ENCODE measurements at regions of chr12 and their contacts with region 1.

Region 1: DNA sequence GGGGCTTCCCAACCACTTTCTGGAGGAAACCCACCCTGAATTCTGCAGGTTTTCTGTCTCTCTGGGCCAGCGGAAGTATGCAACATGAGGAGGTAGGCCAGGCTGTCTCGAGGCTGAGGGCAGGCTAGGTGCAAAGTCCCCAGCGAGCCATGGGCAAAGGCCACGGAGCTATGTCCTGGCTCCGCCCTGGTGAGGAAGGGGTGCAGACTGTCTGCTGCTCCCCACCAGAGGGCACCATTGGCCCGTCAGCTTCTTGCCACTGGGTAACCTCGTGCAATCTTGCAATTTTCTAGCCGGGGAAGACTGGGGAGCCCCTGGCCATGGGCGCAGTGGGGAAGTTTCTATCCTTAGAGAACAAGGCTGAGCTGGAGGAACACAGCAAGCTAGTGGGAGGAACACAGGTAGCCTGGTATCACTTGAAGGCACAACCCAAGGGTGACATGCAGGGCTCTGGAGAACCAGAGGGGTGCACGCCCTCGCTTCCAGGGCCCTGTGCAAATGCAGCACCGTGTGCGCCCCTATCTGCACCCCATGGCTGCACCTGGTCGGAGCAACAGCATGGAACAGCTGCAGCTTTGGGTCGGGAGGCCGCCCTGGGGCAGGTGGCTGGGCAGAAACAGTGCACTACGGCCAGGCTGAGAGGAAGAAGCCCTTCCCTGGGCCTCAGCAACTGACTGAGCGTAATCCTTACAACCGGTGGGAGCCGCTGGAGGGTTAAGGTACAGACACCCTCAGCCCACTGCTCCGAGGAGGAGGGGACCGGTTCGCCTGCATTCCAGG is 27.6 kb upstream of the RPLP0 start:
- DNase-seq: peak; percentile 96
- ATAC-seq: peak; percentile 62
- H3K4me3 Mint-ChIP-seq: peak overlapping the region; percentile 55
- H3K27ac Mint-ChIP-seq: peak overlapping the region; percentile 98
- H3K4me1 Mint-ChIP-seq: peaks cover 78% of the 10 kb centered on the region
- H3K27me3 Mint-ChIP-seq: no peaks in the 10 kb centered on the region; the same call in 1 of the 2 replicates
- CTCF ChIP-seq: peak; percentile 73

Region 2: DNA sequence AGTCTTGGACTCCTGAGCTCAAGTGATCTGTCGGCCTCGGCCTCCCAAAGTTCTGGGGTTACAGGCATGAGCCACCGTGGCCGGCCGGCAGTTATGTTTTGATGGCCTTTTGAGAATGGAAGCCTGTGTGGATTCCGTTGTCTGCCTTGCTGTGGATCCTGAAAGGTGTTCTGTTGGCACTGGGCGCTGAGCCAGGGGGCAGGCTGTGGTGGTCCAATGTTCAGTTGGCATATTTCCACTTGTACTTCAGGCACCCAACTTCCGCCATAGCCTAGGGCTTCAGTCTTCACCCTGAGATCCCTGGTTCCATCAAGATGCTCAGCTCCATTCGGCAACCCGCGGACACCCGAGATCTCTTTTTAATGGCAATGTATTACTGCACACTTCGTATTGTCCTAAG is 21.3 kb before region 1 on chr12:
- CTCF ChIA-PET with region 1: interaction called, 86 read pairs
- POLR2A ChIA-PET with region 1: interaction called, 97 read pairs
- DNase-seq: no peak
- ATAC-seq: no peak
- H3K4me3 Mint-ChIP-seq: no peak overlapping the region
- H3K27ac Mint-ChIP-seq: no peak overlapping the region
- H3K4me1 Mint-ChIP-seq: peaks cover under 1% of the 10 kb centered on the region
- H3K27me3 Mint-ChIP-seq: no peaks in the 10 kb centered on the region
- CTCF ChIP-seq: no peak

Region 3: GRCh38 chr12:120265473-120266179 is 37.1 kb after region 1 on chr12 and contains the start of gene PXN:
- CTCF ChIA-PET with region 1: interaction called, 717 read pairs
- POLR2A ChIA-PET with region 1: interaction called, 198 read pairs
- DNase-seq: peak; percentile 88
- ATAC-seq: peak; percentile 84
- H3K4me3 Mint-ChIP-seq: peak within 1 kb of the TSS; percentile 83
- H3K27ac Mint-ChIP-seq: peak within 1 kb of the TSS; percentile 85
- H3K4me1 Mint-ChIP-seq: peaks cover 49% of the 10 kb centered on the region
- H3K27me3 Mint-ChIP-seq: no peaks in the 10 kb centered on the region
- CTCF ChIP-seq: peak; percentile 78
- total RNA-seq, gene PXN: 96.6 to 132 TPM (median 99.2 TPM) in 3 replicates

Region 4: DNA sequence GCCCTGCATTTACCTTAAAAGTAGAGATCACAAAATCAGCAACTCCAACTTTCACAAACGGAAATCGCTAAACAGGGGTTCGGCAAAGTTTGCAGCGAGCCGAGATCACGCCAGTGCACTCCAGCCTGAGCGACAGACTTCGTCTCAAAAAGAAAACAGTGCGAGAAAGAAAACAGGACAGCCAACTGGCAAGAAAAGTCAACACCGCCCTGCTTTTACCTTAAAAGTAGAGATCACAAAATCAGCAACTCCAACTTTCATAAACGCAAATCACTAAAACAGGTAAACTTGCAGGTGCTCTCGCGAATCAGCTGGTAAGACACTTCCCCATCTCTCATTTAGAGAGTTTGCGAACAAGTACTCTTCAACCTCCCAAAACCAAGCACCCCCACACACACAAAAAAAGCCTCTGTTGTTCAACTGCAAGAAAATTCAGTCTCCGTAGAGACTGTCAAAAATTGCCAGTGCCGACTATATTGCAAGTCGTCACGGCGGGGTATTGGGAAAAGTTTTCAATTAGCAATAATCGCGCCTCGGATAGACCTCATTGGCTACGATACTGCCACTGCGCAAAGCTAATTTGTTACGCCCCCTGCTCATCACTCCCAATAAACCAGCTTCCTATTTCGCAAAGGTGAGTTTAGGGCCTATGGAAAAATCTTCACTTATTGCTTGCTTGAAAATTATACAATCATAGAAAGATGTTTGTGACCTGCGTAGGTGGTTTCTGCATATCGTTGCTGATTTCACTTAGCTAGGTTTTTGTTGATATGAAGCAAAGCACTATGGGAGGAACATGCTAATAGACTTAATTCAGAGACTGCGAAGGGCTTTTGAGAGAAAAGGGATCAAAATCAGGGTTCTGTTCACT is 64.4 kb after region 1 on chr12 and contains the start of gene RNU4-1:
- CTCF ChIA-PET with region 1: interaction called, 145 read pairs
- POLR2A ChIA-PET with region 1: interaction called, 157 read pairs
- DNase-seq: peak; percentile 62
- ATAC-seq: peak; percentile 58
- H3K4me3 Mint-ChIP-seq: no peak within 1 kb of the TSS
- H3K27ac Mint-ChIP-seq: no peak within 1 kb of the TSS
- H3K4me1 Mint-ChIP-seq: peaks cover 9% of the 10 kb centered on the region
- H3K27me3 Mint-ChIP-seq: no peaks in the 10 kb centered on the region; the same call in 1 of the 2 replicates
- CTCF ChIP-seq: no peak
- total RNA-seq, gene RNU4-1: 2,196 to 2,477 TPM (median 2,436 TPM) in 3 replicates

Region 5: DNA sequence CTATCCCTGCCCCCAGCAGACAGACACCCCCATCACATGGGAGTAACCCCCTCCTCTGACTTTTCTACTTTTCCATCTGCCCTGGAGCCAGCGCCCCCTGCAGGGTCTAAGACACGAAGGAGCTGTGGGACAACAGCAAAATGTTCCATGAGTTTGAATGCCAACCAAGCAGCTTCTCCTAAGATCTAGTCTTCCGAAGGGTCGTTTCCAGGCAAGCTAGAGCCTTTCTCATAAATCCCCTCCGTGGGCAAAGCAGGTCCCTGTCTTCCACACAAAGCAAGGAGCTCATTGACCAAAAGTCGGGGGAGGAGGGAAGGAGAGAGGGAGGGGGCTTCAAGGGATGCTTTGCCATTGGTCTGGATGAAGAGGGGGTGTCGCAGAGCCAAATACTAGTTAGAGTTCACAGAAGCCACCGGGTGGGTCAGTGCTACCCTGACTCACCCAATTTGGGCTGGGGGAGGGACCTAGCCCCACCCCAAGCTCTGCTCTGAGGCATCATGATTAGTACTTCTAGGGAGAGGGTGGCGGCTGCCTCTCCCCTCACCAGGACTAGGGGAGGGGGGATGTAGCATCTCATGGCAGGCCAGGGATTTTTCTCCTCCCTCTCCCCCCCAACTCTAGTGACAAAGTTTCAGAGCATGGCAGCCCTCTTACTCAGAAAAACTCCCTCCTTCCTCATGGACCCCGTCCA is 138.9 kb after region 1 on chr12:
- CTCF ChIA-PET with region 1: interaction called, 11 read pairs
- POLR2A ChIA-PET with region 1: no interaction called
- DNase-seq: peak; percentile 65
- ATAC-seq: peak; percentile 7
- H3K4me3 Mint-ChIP-seq: peak overlapping the region; percentile 83
- H3K27ac Mint-ChIP-seq: peak overlapping the region; percentile 93
- H3K4me1 Mint-ChIP-seq: peaks cover 69% of the 10 kb centered on the region
- H3K27me3 Mint-ChIP-seq: peaks cover 29% of the 10 kb centered on the region
- CTCF ChIP-seq: peak; percentile 55